ENCODE measurements at regions of chr5 and their contacts with region 1.

Region 1: GRCh38 chr5:72394688-72395087 is 74.5 kb downstream of the PTCD2 start:
- DNase-seq: no peak
- H3K4me3 ChIP-seq: no peak overlapping the region
- H3K27ac ChIP-seq: no peak overlapping the region
- H3K4me1 ChIP-seq: peaks cover 0 to 43% (median 21%) of the 10 kb centered on the region in 4 donors
- H3K27me3 ChIP-seq: no peaks in the 10 kb centered on the region
- CTCF ChIP-seq: peak in 1 of 2 experiments; percentile 15

Region 2: DNA sequence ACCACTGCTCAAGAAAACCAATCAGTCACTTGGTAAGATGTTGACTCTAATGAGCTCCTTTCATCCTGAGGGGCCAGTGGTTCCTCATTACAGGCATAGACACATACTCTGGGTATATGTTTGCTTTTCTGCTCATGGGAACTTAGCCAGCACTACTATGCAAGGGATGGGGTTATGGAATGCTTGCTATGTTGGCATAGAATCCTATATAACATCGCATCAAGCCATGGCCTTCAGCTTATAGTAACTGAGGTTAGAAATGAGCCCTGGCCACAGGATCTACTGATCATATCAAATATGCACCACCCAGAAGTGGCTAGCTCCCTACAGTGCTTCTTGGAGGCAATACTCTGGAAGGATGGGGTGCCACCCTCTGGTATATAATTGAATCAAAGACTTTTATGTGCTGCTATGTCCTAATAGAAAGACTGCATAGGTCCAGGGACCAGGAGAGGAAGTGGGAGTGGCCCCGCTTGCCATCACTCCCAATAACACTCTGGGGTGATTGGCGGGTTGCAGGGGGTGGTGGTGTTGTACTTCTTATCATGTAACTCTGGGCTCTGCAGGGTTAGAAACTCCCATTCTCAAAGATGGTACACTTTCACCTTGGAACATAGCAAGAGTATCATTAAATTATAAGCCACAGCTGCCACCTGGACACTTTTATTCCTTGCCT is 42.2 kb after region 1 on chr5:
- intact Hi-C with region 1: loop called (anchors 5 kb)
- DNase-seq: no peak
- H3K4me3 ChIP-seq: no peak overlapping the region
- H3K27ac ChIP-seq: peak overlapping the region; percentile 88 to 91
- H3K4me1 ChIP-seq: peaks cover 0 to 87% (median 61%) of the 10 kb centered on the region in 4 donors
- H3K27me3 ChIP-seq: no peaks in the 10 kb centered on the region
- CTCF ChIP-seq: no peak

Region 3: GRCh38 chr5:72892846-72893245 is 498.2 kb after region 1 on chr5:
- intact Hi-C with region 1: no loop called
- DNase-seq: no peak
- H3K4me3 ChIP-seq: no peak overlapping the region
- H3K27ac ChIP-seq: no peak overlapping the region
- H3K4me1 ChIP-seq: no peaks in the 10 kb centered on the region
- H3K27me3 ChIP-seq: no peaks in the 10 kb centered on the region
- CTCF ChIP-seq: no peak